K562 (cell line): ENCODE measurements at regions of chr7 and their contacts with region 1.

Region 1: DNA sequence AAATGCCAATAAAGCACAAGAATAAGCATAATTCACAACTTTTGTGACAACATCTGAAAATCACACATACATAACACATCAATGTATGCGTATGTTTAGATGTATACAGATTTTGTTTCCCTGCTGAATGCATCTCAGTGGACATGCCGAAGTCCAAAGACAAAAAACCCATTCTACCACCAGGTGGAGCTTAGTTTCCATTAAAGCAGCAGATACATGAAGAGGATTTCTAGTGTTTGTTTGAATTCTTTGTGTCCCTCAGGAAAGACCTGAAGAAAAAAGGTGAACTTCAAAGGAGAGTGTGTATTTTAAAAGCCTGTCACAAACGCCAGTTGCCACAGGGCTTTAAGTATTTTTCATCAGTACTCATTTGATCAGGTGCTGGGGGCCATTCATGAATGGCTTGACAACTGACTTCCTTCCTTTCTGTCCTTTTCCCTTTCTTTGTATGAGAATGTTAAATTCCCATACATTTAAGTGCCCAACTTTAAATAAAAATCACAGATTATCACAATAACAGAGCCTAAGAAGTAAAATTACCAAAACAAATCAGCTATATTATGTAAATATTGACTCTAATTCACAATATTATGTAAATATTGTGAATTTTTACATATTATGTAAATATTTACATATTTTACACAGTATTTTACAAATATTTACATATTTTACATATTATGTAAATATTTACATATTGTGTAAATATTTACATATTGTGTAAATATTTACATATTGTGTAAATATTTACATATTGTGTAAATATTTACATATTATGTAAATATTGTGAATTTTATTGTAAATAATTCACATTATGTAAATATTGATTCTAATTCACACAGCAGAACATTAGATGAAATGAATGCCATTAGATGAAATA is 343.0 kb downstream of the CRPPA start:
- DNase-seq: peak; percentile 35 to 83 (median 40)
- ATAC-seq: peak; percentile 94
- H3K4me3 ChIP-seq: no peak overlapping the region
- H3K27ac ChIP-seq: no peak overlapping the region
- H3K4me1 ChIP-seq: no peaks in the 10 kb centered on the region; a peak in 1 of 5 replicates
- H3K27me3 ChIP-seq: no peaks in the 10 kb centered on the region
- CTCF ChIP-seq: peak; percentile 60 to 77 (median 74); a peak in 5 of 6 replicates
- EP300 ChIP-seq: no peak
- POLR2A ChIP-seq: no peak
- RAD21 ChIP-seq: peak; percentile 92 to 95

Region 2: GRCh38 chr7:15889507-15889906 is 188.8 kb before region 1 on chr7:
- CTCF ChIA-PET with region 1: no interaction called
- POLR2A ChIA-PET with region 1: no interaction called
- in situ Hi-C with region 1: no loop called
- intact Hi-C with region 1: no loop called
- DNase-seq: peak in 1 of 4 experiments; percentile 3
- ATAC-seq: no peak
- H3K4me3 ChIP-seq: no peak overlapping the region
- H3K27ac ChIP-seq: no peak overlapping the region
- H3K4me1 ChIP-seq: no peaks in the 10 kb centered on the region
- H3K27me3 ChIP-seq: no peaks in the 10 kb centered on the region
- CTCF ChIP-seq: no peak
- EP300 ChIP-seq: no peak
- POLR2A ChIP-seq: no peak
- RAD21 ChIP-seq: no peak

Region 3: DNA sequence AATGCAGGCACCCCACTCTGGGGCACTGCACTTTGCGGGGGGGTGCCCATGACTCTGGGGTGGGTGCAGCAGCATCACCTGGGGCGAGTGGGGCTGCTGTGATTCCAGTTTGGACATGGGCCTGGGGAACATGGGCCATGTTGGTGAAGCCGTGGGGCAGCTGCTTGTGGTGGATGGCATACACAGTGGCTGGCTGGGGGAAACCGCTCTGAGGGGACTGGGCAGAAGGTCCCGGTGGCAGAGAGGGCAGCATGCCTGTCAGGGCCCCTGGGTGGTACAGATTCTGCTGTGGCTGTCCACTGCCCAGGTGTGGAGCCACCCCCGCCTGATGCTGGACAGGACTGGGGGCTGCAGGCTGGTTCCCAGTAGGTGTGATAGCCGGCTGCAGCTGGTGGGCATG is 505.5 kb after region 1 on chr7:
- CTCF ChIA-PET with region 1: no interaction called
- POLR2A ChIA-PET with region 1: no interaction called
- in situ Hi-C with region 1: no loop called
- intact Hi-C with region 1: loop called (anchors 5 kb)
- DNase-seq: no peak
- ATAC-seq: no peak
- H3K4me3 ChIP-seq: no peak overlapping the region
- H3K27ac ChIP-seq: no peak overlapping the region
- H3K4me1 ChIP-seq: peaks cover 6 to 11% of the 10 kb centered on the region in 2 experiments; a peak in 3 of 5 replicates
- H3K27me3 ChIP-seq: no peaks in the 10 kb centered on the region
- CTCF ChIP-seq: no peak
- EP300 ChIP-seq: no peak
- POLR2A ChIP-seq: no peak
- RAD21 ChIP-seq: no peak